Panc1 (cell line): ENCODE measurements at regions of chr19 and their contacts with region 1.

Region 1: DNA sequence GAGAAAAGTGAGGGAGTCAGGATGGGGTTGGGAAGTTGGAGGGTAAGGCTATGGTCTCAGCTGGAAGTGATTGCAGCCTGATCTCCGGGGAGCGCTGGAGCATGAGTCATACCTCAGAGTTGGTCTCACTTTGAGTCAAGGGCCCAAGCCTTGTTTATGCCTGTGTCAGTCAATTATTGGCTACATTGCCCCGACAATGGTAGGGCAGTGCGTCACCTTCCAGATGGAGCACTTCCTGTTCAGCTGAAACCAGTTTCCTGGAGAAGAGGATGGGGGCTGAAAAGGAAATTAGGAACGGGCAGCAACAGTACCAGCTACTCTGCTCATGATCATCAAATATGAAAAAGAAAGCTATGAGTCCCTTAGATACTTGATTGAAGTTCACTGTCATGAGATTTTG is 60.4 kb downstream of the ADGRE1 start:
- DNase-seq: no peak
- ATAC-seq: no peak
- H3K4me3 ChIP-seq: no peak overlapping the region
- H3K27ac ChIP-seq: no peak overlapping the region
- H3K4me1 ChIP-seq: no peaks in the 10 kb centered on the region
- H3K27me3 ChIP-seq: peaks cover 2% of the 10 kb centered on the region; the same call in 1 of the 2 replicates
- CTCF ChIP-seq: no peak

Region 2: DNA sequence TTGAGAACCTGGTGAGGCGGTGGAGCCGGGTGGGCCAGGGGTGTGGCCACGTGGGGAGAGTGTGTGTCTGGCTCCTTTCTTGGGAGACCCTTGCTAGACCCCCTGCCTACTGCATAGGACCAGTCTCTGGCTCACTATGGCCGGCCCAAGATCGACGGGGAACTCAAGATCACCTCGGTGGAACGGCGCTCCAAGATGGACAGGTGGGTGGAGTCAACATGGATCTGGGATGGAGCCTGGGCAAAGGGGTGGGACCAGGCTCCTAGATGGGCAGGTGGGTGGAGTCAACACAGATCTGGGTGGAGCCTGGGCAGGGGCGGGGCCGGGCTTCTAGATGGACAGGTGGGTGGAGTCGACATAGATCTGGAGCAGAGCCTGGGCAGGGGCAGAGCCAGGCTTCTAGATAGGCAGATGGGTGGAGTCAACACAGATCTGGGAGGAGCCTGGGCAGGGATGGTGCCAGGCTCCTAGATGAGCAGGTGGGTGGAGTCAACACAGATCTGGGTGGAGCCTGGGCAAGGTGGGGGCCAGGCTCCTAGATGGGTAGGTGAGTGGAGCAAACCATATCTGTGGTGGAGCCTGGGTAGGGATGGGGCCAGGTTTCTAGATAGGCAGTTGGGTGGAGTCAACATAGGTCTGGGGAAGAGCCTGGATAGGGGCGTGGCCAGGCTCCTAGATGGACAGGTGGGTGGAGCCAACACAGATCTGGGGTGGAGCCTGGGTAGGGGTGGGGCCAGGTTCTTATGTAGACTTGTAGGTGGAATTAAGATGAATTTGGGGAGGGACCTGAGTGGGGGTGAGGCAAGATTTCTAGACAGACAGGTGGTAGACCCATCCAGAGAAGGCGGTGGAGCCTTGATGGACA is 118.8 kb before region 1 on chr19:
- CTCF ChIA-PET with region 1: no interaction called
- POLR2A ChIA-PET with region 1: interaction called, 14 read pairs
- in situ Hi-C with region 1: no loop called
- intact Hi-C with region 1: no loop called
- DNase-seq: no peak
- ATAC-seq: peak; percentile 78
- H3K4me3 ChIP-seq: no peak overlapping the region
- H3K27ac ChIP-seq: no peak overlapping the region
- H3K4me1 ChIP-seq: no peaks in the 10 kb centered on the region
- H3K27me3 ChIP-seq: no peaks in the 10 kb centered on the region
- CTCF ChIP-seq: no peak